Ovary (tissue), 10 donors: ENCODE measurements at regions of chr17 and their contacts with region 1.

Region 1: GRCh38 chr17:30093463-30094147 is 23.0 kb upstream of the NSRP1 start:
- DNase-seq: peak in 2 of 5 donors; percentile 33 to 46
- H3K4me3 ChIP-seq: no peak overlapping the region
- H3K27ac ChIP-seq: no peak overlapping the region
- H3K4me1 ChIP-seq: no peaks in the 10 kb centered on the region
- H3K27me3 ChIP-seq: no peaks in the 10 kb centered on the region
- CTCF ChIP-seq: peak in 2 of 3 donors; percentile 69 to 76
- EP300 ChIP-seq: no peak
- POLR2A ChIP-seq: no peak

Region 2: DNA sequence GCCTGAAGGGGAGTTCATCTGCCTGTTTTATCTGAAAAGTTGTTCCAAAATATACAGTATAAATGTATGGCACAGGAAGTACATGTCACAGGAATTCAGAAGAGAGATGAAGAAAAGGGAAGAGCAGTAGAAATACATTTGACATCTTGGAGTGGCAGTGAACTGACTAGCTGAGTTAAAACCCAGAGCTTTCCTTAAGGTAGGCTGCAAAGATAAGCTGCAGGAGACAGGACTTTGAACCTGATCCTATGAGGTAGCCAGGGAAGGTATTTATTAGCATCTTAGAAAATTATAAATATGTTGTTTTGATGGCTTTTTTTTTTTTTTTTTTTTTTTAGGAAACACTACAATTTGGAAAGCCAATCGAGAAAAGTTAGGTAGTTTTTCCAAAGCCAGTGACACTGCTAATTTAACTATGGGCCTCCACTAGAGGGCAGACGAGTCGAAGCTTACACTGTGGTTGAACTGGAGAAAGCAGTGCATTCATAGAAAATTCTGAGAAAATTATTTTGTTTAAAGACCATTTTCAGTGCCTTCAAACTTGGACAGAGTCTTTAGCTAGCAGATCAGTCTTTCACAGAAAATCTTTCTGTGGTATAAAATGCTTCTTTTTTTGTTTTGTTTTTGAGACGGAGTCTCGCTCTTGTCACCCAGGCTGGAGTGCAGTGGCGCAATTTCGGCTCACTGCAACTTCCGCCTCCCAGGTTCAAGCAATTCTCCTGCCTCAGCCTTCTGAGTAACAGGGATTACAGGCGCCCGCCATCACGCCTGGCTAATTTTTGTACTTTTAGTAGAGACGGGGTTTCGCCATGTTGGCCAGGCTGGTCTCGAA is 285.9 kb before region 1 on chr17:
- intact Hi-C with region 1: loop called in 2 of 4 experiments (anchors 10 kb)
- DNase-seq: peak; percentile 37 to 71 (median 54)
- H3K4me3 ChIP-seq: no peak overlapping the region
- H3K27ac ChIP-seq: no peak overlapping the region
- H3K4me1 ChIP-seq: no peaks in the 10 kb centered on the region
- H3K27me3 ChIP-seq: no peaks in the 10 kb centered on the region
- CTCF ChIP-seq: peak; percentile 16 to 57 (median 33)
- EP300 ChIP-seq: no peak
- POLR2A ChIP-seq: no peak